ENCODE measurements at regions of chr6 and their contacts with region 1.

Region 1: GRCh38 chr6:37791156-37791919 is 28.2 kb upstream of the ZFAND3 start:
- DNase-seq: peak; percentile 83 to 97
- H3K4me3 ChIP-seq: no peak overlapping the region
- H3K27ac ChIP-seq: no peak overlapping the region
- H3K4me1 ChIP-seq: peaks cover 0 to 10% of the 10 kb centered on the region in 2 donors
- H3K27me3 ChIP-seq: no peaks in the 10 kb centered on the region
- CTCF ChIP-seq: peak; percentile 92 to 94 (median 92)

Region 2: DNA sequence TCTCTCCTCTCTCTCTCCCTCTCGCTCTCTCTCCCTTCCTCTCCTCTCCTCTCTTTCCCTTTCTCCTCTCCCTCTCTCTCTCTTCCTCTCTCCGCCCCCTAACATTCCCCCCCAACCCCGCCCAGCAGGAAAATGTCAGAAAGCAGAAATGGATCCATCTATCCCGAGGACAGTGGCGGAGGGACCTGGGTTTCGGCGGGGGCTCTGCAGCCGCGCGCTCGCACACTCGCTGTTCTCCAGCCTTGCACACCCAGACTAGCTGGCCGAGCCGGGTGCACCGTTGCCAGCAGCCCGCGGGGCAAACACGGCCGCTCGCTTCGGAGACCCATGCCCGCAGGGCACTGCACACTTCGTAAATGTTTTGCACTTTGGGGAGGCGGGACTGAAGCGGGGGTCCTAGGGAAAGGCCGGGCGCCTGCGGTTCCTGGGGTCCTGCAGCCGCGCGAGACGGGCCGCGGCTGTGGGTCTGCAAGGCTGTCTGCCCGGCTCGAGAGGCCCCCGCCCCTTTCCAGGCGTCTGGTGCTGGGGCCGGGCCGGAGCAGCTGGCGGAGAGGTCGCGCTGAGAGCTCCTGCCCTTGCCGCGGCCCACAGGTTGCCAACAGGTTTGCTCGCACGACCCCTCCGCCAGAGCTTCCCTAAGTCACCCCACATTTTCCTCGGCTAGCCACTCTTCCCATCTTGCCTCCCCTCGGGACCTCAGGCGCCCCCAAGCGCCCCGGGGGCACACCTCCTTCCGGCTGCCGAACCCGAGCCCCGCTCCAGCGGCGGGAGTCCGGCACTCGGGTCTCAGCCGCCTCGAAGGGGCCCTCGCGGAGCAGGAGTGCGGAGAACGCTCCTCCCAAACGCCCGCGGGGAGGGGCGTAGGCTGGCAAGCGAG is 92.8 kb before region 1 on chr6:
- intact Hi-C with region 1: loop called (anchors 5 kb)
- DNase-seq: peak in 1 of 2 donors; percentile 69
- H3K4me3 ChIP-seq: peak overlapping the region; percentile 71 to 72
- H3K27ac ChIP-seq: peak overlapping the region; percentile 4 to 74
- H3K4me1 ChIP-seq: peaks cover 9 to 25% of the 10 kb centered on the region in 2 donors
- H3K27me3 ChIP-seq: no peaks in the 10 kb centered on the region
- CTCF ChIP-seq: peak in 1 of 3 experiments; percentile 26

Region 3: GRCh38 chr6:37819177-37819823 is 28.0 kb after region 1 on chr6 and contains the start of gene ZFAND3:
- intact Hi-C with region 1: loop called (anchors 1 kb)
- DNase-seq: peak; percentile 78 to 98
- H3K4me3 ChIP-seq: peak within 1 kb of the TSS; percentile 60 to 92
- H3K27ac ChIP-seq: peak within 1 kb of the TSS; percentile 91
- H3K4me1 ChIP-seq: peaks cover 0 to 28% of the 10 kb centered on the region in 2 donors
- H3K27me3 ChIP-seq: no peaks in the 10 kb centered on the region
- CTCF ChIP-seq: no peak
- total RNA-seq, gene ZFAND3: 32.7 TPM

Region 4: DNA sequence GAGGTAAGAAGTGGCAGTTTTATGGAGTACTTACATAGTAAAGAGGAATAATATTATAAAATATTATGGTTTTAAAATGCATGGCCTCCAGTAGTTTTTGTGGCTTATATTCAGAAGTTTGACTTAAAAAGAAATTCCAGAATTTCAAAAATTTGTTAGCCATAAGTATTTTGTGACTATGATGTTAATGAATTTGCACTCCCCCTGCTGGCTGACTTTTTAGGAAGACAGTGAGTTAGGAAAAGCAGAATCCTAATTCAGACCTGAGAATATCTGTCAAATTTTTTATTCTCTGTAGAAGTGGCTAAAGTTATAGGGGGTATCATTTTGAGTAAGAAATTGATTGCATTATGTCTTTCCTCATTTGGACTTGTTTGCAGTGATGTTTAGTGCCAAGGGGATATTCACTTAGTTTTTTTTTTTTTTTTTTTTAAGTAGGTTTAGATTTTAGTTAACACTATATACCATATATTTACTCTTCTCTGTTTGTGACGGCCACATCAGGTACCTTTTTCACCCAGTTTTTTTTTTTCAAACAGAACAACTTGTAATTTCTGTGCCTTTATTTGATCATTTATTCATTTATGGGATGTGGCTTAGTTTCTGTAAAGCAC is 69.0 kb after region 1 on chr6:
- intact Hi-C with region 1: loop called (anchors 2 kb)
- DNase-seq: no peak
- H3K4me3 ChIP-seq: no peak overlapping the region
- H3K27ac ChIP-seq: no peak overlapping the region
- H3K4me1 ChIP-seq: peaks cover 0 to 14% of the 10 kb centered on the region in 2 donors
- H3K27me3 ChIP-seq: no peaks in the 10 kb centered on the region
- CTCF ChIP-seq: peak; percentile 20 to 54 (median 47)

Region 5: GRCh38 chr6:37990762-37991525 is 199.6 kb after region 1 on chr6:
- intact Hi-C with region 1: loop called (anchors 5 kb)
- DNase-seq: no peak
- H3K4me3 ChIP-seq: no peak overlapping the region
- H3K27ac ChIP-seq: peak overlapping the region; percentile 35 to 45
- H3K4me1 ChIP-seq: peaks cover 7 to 36% of the 10 kb centered on the region in 2 donors
- H3K27me3 ChIP-seq: no peaks in the 10 kb centered on the region
- CTCF ChIP-seq: no peak

Region 6: DNA sequence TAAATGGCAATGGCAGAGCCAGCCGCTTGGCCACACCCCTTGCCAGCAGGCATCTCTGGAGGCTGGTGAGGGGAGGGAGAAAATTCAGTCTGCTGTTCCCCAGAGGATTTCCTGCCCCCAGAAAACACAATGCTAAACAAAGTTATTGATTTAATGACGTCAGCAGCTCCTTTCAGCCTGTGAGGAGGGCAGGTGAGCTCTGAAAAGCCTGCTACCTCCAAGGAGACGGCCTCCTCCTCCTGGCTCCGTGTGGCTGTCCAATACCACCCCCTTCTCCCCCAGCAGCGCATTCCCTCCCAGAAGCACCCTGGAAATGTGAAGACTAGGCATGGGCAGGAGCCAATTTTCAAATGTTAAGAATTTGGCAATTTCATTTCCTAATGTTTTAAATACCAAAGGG is 421.2 kb after region 1 on chr6:
- intact Hi-C with region 1: loop called (anchors 10 kb)
- DNase-seq: peak in 1 of 2 donors; percentile 75
- H3K4me3 ChIP-seq: no peak overlapping the region
- H3K27ac ChIP-seq: peak overlapping the region; percentile 81 to 82
- H3K4me1 ChIP-seq: peaks cover 10 to 32% of the 10 kb centered on the region in 2 donors
- H3K27me3 ChIP-seq: no peaks in the 10 kb centered on the region
- CTCF ChIP-seq: no peak

Region 7: GRCh38 chr6:38493931-38494547 is 702.7 kb after region 1 on chr6:
- intact Hi-C with region 1: loop called (anchors 5 kb)
- DNase-seq: peak in 1 of 2 donors; percentile 87
- H3K4me3 ChIP-seq: no peak overlapping the region
- H3K27ac ChIP-seq: no peak overlapping the region
- H3K4me1 ChIP-seq: no peaks in the 10 kb centered on the region
- H3K27me3 ChIP-seq: no peaks in the 10 kb centered on the region
- CTCF ChIP-seq: peak; percentile 68 to 88 (median 84)